ENCODE measurements at regions of chr12 and their contacts with region 1.

Region 1: DNA sequence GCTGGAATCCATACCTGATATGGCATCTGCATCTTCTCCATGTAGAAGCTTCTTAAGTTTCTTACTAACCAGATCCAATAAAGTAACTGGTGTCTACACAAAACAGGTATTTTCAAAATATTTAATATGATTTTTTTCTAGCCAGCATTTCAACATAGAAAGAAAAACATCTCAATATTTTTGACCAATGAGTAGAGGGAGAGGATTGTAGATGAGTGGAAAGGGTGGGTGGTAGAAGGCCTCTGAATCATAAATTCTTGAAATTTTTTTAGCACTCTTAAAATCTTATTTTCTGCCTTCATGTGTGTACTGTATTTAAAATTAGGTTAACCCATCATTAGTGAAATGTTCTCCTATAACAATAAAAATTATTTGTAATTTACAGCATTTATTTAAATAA is 18.0 kb downstream of the DEPDC4 start:
- DNase-seq: no peak

Region 2: DNA sequence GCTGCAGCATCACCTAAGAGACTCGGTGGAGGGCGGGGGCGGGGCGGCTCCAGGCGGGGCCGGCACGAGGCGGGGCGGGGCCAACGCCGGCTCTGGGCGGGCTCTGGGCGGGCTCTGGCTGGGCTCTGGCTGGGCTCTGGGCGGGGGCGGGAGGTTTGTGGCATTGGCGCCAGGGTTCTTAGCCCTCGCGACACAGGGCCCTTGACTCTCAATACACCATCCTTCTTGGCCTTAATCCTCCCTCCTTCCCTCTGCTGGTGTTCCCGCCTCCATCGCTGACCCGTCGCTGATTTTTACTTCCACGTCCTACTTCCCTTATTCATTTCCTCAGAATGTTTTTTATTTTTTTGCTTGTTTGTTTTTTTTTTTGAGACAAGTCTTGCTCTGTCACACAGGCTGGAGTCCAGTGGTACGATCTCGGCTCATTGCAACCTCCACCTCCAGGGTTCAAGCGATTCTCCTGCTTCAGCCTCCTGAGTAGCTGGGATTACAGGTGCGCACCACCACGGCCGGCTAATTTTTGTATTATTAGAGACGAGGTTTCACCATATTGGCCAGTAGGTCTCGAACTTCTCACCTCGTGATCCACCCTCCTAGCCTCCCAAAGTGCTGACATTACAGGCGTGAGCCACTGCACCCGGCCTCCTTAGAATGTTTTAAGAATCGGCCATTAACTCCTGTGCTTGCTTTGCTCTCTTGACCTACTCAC is 105.9 kb before region 1 on chr12 and contains the start of gene BLTP3B:
- in situ Hi-C with region 1: no loop called
- DNase-seq: peak; percentile 94
- total RNA-seq, gene BLTP3B: 34.2 and 53.8 TPM in 2 replicates

Region 3: GRCh38 chr12:100566887-100567637 is 318.2 kb after region 1 on chr12:
- in situ Hi-C with region 1: loop called (anchors 10 kb)
- DNase-seq: no peak

Measured in G401 (cell line).